Left colon (tissue), 2 donors: ENCODE measurements at regions of chr17 and their contacts with region 1.

Region 1: GRCh38 chr17:38667099-38667786 is 7.5 kb downstream of the EPOP start:
- DNase-seq: peak; percentile 48 to 66
- ATAC-seq: peak; percentile 79

Region 2: GRCh38 chr17:38498186-38498752 is 169.0 kb before region 1 on chr17:
- intact Hi-C with region 1: loop called in 1 of 2 experiments (anchors 10 kb)
- DNase-seq: no peak
- ATAC-seq: no peak

Region 3: DNA sequence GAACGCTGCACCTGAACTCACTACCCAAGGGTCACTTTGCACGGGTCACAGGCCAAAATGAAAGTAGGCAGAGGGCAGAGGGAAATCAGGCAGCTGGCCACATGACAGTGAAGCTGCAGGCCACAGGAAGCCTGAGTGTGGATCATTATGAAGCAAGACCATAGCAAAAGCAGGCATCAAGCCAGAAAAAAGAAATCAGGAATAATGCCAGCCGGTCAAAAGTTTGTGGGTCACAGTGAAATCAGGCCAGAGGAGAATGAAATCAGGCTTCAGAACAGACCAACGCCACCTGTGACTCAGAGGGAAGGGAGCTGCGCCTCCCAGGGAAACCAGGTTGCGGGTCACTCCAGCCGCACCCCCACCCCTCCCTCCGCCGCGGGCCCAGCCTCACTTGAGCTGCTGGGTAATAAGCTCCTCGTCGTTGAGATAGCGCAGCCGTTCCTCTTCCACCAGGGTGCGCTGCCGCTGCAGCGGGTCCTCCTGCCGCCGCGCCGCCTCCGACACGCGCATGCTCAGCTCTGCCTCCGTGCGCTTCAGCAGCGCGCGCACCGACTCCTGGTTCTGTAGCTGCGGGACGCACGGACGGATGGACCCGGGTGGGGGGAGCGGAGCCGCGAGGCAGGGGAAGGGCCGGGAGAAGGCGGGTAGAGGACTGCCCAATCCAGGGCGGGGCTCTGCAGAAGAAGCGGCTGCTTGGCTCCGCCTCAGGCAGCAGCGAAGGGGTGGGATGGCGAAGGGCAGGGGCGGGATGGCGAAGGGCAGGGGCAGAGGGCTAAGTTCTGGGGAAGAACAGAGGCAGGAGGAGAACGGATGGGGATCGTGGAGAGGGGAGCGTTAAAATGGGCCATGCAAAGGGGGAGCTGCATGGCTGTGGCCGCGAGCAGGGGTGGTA is 109.2 kb before region 1 on chr17:
- intact Hi-C with region 1: loop called (anchors 5 to 10 kb)
- DNase-seq: peak; percentile 89 to 93
- ATAC-seq: peak; percentile 90

Region 4: DNA sequence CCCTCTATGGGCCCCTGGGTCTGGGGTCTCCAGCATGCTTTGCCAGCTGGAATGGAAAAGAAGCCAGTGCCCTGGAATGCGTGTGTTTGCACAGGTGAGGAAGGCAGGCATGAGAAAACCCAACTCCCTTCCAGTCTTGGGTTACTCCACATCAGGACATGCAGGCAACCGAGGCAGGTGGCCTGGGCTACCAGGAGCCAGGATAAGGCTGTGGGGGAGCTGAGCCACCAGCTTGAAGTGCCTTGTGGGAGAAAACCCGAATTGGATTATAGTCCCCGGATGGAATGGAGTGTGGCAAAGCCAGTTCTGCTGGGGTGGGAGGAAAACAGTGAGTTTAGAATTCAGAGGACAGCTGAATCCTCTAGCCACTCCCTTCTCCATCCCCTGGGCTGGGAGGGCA is 68.7 kb before region 1 on chr17:
- intact Hi-C with region 1: no loop called
- DNase-seq: peak; percentile 59 to 61
- ATAC-seq: peak; percentile 60

Region 5: DNA sequence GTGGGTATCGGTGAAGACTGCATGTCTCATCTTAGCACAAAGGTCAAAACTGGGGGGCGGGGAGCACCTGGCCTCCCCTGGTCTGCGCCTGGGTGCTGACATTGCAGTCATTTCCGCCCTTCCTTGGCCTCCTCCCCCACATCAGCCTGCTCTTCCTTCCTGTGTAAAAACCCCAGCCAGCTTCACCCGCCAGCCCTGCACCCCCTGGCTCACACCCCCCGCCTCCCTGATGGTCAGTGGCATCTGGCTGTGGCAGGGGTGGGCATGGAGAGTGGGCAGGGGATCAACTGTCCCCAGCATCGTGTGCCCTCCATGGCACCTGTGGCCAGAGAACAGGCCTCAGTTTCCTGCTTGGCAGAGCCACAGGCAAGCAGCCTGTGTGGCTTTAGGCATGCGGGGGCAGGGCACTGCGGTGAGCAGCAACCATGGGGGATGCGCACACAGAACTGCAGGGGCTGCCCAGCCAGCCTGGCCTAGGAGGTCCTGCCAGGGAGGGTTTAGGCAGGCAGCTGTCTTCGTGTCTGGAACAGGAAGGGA is 231.6 kb after region 1 on chr17:
- intact Hi-C with region 1: no loop called
- DNase-seq: peak; percentile 66 to 72
- ATAC-seq: peak; percentile 46